Left lung (tissue), 14 donors: ENCODE measurements at regions of chr3 and their contacts with region 1.

Region 1: GRCh38 chr3:66276705-66277274 is 56.0 kb downstream of the SLC25A26 start:
- DNase-seq: peak in 1 of 4 donors; percentile 79
- ATAC-seq: peak; percentile 86
- H3K4me3 ChIP-seq: no peak overlapping the region
- H3K27ac ChIP-seq: no peak overlapping the region
- H3K4me1 ChIP-seq: no peaks in the 10 kb centered on the region
- H3K27me3 ChIP-seq: no peaks in the 10 kb centered on the region
- CTCF ChIP-seq: peak; percentile 61 to 70

Region 2: DNA sequence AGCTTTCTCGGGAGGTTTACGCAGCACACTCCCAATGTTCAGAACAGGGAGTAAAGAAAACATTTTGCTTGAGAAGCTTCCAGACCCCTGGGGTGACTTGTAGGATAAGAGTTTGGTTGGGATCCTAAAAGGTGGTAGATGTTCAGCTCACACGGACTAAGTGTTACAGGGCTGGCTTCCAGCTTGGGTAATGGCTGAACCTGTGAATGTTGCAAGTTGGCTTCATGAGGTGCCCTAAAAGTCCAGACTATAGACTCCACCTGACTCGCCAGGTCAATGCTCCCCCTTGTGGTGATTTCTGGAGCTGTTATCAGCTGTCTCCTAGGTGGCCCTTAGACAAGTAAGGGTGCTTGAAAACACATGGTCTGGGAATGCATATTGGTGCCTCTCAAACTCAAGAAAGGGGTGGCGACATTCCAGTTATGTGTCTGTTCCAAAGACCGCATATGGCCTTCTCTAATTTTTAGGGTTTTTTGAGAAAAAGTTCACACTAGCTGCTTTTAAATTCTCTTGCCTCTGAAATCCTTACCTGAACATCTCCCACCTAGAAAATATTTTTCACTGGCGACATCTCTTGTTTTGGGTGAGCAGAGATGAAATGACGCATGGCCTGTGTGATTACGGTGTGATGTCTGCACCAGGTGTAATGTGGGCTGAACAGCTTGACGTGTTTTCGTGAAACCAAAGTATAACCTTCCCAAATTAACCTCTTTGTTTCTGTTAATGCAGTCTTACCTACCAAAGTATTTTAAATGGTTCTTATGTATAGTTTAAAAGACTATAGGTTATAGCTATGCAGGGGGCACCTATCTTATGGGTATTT is 545.6 kb after region 1 on chr3:
- intact Hi-C with region 1: loop called in 1 of 2 experiments (anchors 5 kb)
- DNase-seq: peak in 3 of 4 donors; percentile 20 to 57 (median 49)
- ATAC-seq: peak; percentile 98
- H3K4me3 ChIP-seq: no peak overlapping the region
- H3K27ac ChIP-seq: no peak overlapping the region
- H3K4me1 ChIP-seq: no peaks in the 10 kb centered on the region
- H3K27me3 ChIP-seq: no peaks in the 10 kb centered on the region
- CTCF ChIP-seq: peak; percentile 61 to 62